Transverse colon (tissue), 4 donors: ENCODE measurements at regions of chr10 and their contacts with region 1.

Region 1: DNA sequence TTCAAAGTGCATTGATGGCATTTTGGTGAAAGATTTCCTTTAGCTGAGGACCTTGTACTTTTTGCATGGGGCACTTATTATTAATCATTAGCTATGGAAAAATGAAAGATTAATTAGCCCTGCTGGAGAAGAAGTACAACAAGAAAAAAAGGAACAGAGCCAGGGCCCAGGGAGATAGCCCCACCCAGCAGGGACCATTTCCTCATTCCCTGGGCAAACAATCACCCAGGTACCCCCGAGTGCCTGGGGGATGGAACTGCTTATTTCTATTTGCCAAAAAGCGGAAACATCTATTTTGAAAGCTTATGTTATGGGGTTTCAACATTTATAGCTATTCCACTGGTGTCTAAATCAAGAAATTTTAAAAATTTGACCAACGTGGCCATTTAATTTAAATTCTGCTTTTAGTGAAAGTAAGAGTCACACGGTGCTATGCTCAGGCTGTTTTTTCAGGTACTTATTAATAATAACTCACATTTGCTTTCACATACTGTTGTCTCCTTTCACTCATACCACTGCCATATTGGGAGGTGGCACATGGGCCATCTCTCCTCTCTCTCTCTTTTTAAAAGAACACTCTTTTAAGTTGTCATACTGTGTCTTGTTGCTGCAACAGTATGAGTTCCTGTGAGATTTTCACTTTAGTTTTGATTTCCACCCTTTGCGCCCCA is 143.6 kb upstream of the KIF5B start:
- DNase-seq: no peak
- H3K4me3 ChIP-seq: no peak overlapping the region
- H3K27ac ChIP-seq: no peak overlapping the region
- H3K4me1 ChIP-seq: no peaks in the 10 kb centered on the region
- H3K27me3 ChIP-seq: no peaks in the 10 kb centered on the region
- CTCF ChIP-seq: no peak
- EP300 ChIP-seq: no peak
- POLR2A ChIP-seq: no peak

Region 2: GRCh38 chr10:31723106-31723750 is 476.6 kb before region 1 on chr10:
- in situ Hi-C with region 1: no loop called
- intact Hi-C with region 1: no loop called
- DNase-seq: no peak
- H3K4me3 ChIP-seq: no peak overlapping the region
- H3K27ac ChIP-seq: no peak overlapping the region
- H3K4me1 ChIP-seq: no peaks in the 10 kb centered on the region
- H3K27me3 ChIP-seq: no peaks in the 10 kb centered on the region
- CTCF ChIP-seq: no peak
- EP300 ChIP-seq: no peak
- POLR2A ChIP-seq: no peak

Region 3: GRCh38 chr10:32163071-32163761 is 36.6 kb before region 1 on chr10:
- in situ Hi-C with region 1: no loop called
- intact Hi-C with region 1: loop called (anchors 1 kb)
- DNase-seq: no peak
- H3K4me3 ChIP-seq: no peak overlapping the region
- H3K27ac ChIP-seq: peak overlapping the region; percentile 44 to 64 (median 61)
- H3K4me1 ChIP-seq: peaks cover 0 to 12% (median 3%) of the 10 kb centered on the region in 4 donors
- H3K27me3 ChIP-seq: no peaks in the 10 kb centered on the region
- CTCF ChIP-seq: no peak
- EP300 ChIP-seq: no peak
- POLR2A ChIP-seq: no peak